Right ventricle myocardium inferior (tissue), 1 donor: ENCODE measurements at regions of chr21 and their contacts with region 1.

Region 1: GRCh38 chr21:31180256-31181081 is 142.2 kb upstream of the KRTAP19-8 start:
- DNase-seq: no peak
- ATAC-seq: no peak

Region 2: GRCh38 chr21:30942192-30942591 is 238.3 kb before region 1 on chr21:
- intact Hi-C with region 1: no loop called
- DNase-seq: no peak
- ATAC-seq: no peak

Region 3: DNA sequence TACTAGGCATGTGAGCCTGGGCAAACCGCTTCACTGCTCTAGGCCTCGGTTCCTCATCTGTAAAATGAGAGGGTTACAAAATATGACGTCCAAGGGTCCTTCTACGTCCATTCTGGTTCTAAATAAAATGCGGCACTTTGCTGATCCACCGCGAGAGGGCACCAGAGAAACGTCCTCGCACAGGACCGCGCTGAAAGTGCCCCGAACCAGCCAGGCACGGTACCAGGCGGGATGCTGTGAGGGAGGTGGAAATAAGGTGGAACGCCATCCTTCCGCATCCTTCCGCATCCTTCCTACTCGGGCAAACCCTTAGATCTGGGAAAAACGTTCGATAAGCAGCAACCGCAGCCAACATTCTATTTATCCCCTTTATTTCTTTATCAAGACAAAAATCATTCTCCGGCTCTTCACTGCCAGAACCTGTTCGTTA is 81.9 kb before region 1 on chr21:
- intact Hi-C with region 1: loop called (anchors 2 kb)
- DNase-seq: peak; percentile 82
- ATAC-seq: peak; percentile 44